WTC11 (cell line): ENCODE measurements at regions of chr12 and their contacts with region 1.

Region 1: DNA sequence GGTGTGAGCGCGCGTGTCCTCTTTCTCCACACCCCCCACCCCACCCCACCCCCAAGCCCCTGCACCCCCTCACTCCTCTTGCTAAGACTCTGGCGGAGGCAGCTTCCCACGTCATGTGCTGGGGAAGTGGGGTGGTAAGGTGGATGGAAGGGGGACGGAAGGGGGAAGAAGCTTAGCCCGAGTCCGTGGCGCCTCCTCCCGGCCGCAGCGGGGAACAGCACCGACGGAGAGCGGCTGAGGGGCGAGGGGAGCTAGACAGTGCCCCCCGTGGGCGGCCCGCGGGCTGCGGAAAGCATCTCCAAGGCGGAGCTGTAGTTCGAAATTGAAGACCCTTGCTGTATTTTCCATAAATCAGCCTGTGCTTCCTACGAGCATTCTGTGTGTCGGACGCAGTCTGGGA is 588 bp upstream of the GRIN2B start:
- DNase-seq: peak; percentile 92
- ATAC-seq: peak; percentile 84
- H3K4me3 Mint-ChIP-seq: peak overlapping the region; percentile 92
- H3K27ac Mint-ChIP-seq: no peak overlapping the region
- H3K4me1 Mint-ChIP-seq: peaks cover 17% of the 10 kb centered on the region
- H3K27me3 Mint-ChIP-seq: peaks cover 74% of the 10 kb centered on the region
- CTCF ChIP-seq: peak; percentile 88

Region 2: DNA sequence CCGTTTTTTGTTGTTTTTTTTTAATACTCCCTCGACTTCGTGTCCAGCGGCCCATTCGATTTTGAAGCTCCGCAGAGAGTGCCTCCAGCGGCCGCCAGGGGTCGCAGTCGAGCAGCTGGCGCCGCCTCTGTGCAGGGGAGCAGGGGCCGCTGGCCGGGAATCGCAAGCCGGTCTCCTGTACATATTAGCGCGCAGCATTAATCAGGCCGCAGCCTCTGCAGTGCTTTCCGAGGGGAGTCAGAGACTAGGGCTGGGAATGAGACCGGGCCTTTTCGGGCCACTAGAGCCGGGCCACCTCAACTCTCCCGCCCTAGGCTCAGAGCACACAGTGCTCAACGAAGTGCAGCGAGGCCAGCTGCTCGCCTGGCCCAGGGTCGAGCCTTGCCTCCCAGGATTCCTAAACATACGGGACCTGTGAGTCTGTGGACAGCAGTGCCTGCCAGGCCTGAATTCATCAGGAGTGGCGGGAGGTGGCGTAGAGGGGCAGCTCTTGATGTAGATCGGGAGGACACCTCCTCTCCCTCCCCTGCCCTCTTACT is 703.7 kb before region 1 on chr12:
- CTCF ChIA-PET with region 1: interaction called, 19 read pairs
- POLR2A ChIA-PET with region 1: no interaction called
- DNase-seq: peak; percentile 83
- ATAC-seq: peak; percentile 90
- H3K4me3 Mint-ChIP-seq: peak overlapping the region; percentile 24; the same call in 1 of the 2 replicates
- H3K27ac Mint-ChIP-seq: no peak overlapping the region
- H3K4me1 Mint-ChIP-seq: peaks cover 28% of the 10 kb centered on the region
- H3K27me3 Mint-ChIP-seq: no peaks in the 10 kb centered on the region; the same call in none of the 2 replicates
- CTCF ChIP-seq: peak; percentile 99

Region 3: DNA sequence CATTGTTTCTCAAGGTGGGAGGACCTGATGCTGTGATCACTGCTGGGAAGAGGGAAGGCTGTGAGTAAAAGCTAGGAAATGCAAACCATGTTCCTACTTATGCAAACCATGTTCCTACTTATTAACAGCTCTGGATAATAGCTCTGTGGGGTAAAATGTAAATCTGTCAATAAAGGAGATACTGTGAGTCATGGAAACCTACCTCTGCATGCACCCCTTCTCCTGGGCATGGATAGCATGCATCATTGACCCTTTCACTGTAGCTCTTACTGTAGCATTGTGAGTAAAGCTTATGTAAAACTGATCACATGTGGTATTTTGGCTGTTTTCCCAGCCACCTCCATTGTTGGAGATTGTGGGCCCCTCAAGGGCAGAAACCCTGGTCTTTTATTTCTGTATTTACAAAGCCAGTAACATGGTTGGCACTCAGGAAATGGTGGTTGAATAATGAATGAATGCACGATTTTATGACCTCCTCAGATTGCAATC is 254.2 kb before region 1 on chr12:
- CTCF ChIA-PET with region 1: interaction called, 13 read pairs
- POLR2A ChIA-PET with region 1: no interaction called
- DNase-seq: no peak
- ATAC-seq: peak; percentile 84
- H3K4me3 Mint-ChIP-seq: no peak overlapping the region
- H3K27ac Mint-ChIP-seq: no peak overlapping the region
- H3K4me1 Mint-ChIP-seq: peaks cover 33% of the 10 kb centered on the region
- H3K27me3 Mint-ChIP-seq: peaks cover 96% of the 10 kb centered on the region
- CTCF ChIP-seq: no peak

Region 4: DNA sequence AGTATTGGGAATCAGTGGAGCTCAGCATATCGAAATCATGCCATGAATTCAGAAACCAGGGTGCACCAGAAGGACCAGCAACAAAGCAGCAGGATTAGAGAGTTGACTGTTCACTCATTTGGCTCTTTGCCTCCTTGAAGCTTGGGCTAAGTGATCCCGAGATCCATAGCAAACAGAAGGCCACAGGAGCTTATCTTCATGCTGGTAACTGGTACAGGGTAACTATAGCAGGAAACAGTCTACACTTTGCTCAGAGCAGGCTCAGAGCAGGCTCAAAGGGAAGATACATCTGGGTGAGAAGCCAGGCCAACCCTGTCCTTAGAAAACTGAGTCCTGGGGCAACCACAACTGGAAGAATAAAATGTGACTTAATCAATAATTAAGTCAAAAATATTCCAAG is 111.7 kb before region 1 on chr12:
- CTCF ChIA-PET with region 1: interaction called, 10 read pairs
- POLR2A ChIA-PET with region 1: no interaction called
- DNase-seq: no peak
- ATAC-seq: no peak
- H3K4me3 Mint-ChIP-seq: no peak overlapping the region
- H3K27ac Mint-ChIP-seq: no peak overlapping the region
- H3K4me1 Mint-ChIP-seq: no peaks in the 10 kb centered on the region; the same call in 1 of the 2 replicates
- H3K27me3 Mint-ChIP-seq: no peaks in the 10 kb centered on the region; the same call in 1 of the 2 replicates
- CTCF ChIP-seq: no peak

Region 5: DNA sequence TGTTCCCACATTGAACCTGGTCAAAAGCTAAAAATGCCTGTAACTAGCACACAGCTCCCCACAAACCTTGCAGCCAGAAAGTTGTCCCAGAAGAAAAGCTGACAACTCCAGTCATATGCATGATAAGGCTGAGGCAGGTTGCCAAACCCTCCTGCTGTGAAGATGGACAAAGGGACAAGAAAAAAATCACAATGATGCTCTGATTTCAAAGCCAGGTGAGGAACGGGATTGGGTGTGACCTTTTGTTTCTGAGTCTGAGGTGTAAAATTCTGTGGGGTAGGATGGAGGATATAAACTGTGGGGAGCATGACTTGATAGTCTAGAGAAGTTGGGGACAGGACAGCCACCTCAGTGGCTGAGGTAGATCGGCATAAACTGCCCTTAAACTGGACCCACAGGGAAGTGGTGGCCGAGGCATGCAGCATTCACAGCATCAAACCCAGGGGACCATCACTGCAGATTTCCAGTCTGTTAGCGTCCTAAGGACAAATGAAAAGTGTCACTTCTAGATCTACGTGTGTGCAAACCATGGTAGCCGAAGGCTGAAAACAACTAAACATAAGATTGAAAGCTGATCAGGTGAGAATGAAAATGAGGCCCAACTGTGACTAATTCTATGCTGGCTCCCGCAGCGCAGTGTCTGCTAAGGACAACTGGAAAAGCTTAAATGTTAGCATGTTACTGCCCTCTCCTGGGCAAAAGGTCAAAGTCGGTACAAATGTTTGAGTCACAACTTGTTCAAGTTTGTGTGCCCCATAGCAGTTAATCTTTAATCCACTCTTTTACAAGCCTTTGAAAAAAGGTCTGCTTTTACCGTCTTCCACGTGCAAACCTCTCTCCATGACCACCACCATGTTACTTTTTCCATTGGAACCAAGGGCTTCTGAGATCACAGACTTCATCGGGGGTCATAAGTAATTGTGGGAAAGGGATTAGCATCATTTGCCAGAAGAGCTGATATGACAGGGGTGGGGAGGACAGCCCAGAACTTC is 40.4 kb before region 1 on chr12:
- CTCF ChIA-PET with region 1: interaction called, 35 read pairs
- POLR2A ChIA-PET with region 1: no interaction called
- DNase-seq: peak; percentile 74
- ATAC-seq: peak; percentile 85
- H3K4me3 Mint-ChIP-seq: peak overlapping the region; percentile 38
- H3K27ac Mint-ChIP-seq: peak overlapping the region; percentile 38; the same call in 1 of the 2 replicates
- H3K4me1 Mint-ChIP-seq: peaks cover 30% of the 10 kb centered on the region
- H3K27me3 Mint-ChIP-seq: no peaks in the 10 kb centered on the region
- CTCF ChIP-seq: peak; percentile 27

Region 6: GRCh38 chr12:14138495-14138894 is 156.5 kb after region 1 on chr12:
- CTCF ChIA-PET with region 1: interaction called, 11 read pairs
- POLR2A ChIA-PET with region 1: no interaction called
- DNase-seq: peak; percentile 64
- ATAC-seq: peak; percentile 100
- H3K4me3 Mint-ChIP-seq: no peak overlapping the region
- H3K27ac Mint-ChIP-seq: no peak overlapping the region
- H3K4me1 Mint-ChIP-seq: no peaks in the 10 kb centered on the region
- H3K27me3 Mint-ChIP-seq: no peaks in the 10 kb centered on the region
- CTCF ChIP-seq: peak; percentile 50